B cell (primary cell): ENCODE measurements at regions of chr3 and their contacts with region 1.

Region 1: DNA sequence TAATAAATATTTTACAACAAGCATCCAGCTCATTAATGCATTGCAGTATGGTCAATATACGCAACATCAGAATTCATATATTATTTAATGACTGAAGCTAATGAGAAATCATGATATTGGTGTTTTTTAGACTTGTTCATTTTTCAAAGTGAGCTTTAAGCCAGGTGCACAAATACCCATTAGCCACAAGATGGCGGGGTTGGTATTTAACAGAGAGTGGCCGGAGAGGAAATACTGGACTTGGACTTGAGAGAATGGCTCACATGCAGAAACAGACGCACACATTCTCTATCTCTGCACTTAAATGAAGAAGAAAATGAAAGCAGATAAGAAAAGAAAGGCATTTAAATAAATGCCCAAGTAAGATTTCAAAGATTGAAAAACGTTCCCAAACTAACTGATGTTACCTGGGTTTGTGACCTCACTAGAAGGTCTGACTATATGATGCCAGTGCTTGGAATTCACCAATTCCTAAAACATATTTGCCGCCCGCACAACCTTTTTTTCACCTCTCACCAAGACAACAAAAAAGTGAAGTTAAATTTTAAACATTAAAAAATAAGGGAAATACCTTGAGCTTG is 21.2 kb upstream of the CRBN start:
- DNase-seq: peak; percentile 70
- ATAC-seq: peak; percentile 57
- H3K4me3 ChIP-seq: no peak overlapping the region
- H3K4me3 Mint-ChIP-seq: no peak overlapping the region
- H3K27ac ChIP-seq: no peak overlapping the region
- H3K27ac Mint-ChIP-seq: no peak overlapping the region
- H3K4me1 ChIP-seq: peaks cover 0 to 3% of the 10 kb centered on the region in 2 donors
- H3K4me1 Mint-ChIP-seq: peaks cover 8% of the 10 kb centered on the region
- H3K27me3 ChIP-seq: no peaks in the 10 kb centered on the region
- H3K27me3 Mint-ChIP-seq: peaks cover 9% of the 10 kb centered on the region
- CTCF ChIP-seq: peak; percentile 95

Region 2: DNA sequence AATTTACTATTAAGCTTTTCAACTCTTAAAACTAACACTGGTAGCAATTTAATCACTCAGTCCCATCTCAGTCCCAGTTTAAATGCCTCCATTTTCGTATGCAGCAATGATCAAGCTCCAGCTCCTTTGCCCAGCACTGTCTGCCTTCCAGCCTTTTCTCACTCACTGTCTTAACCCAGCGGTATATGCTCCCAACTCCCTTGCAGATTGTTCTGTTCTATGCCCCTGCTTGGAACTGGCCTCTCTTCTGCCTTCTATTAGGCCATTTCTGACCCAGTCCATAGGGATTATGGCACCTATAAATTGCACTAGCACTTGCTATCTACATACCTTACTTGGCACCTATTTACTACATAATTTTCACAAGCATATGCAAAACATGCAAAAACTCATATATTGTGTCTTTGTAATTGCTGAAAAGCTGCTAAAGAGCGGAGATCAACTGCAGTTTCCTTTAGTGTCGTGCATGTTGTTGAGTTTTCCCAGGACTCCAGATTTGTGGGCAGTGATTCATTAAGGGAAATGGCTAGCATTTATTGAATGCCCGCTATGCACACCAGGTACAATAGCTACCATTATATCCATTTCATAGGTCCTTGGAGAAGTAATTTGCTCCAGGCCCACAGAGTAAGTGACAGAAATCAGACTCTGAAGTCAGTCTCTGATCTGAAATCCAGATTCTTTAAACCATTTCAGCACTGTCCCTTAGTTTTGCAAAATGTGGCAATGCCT is 45.7 kb before region 1 on chr3:
- CTCF ChIA-PET with region 1: no interaction called
- POLR2A ChIA-PET with region 1: no interaction called
- intact Hi-C with region 1: no loop called
- DNase-seq: no peak
- ATAC-seq: no peak
- H3K4me3 ChIP-seq: no peak overlapping the region
- H3K4me3 Mint-ChIP-seq: no peak overlapping the region
- H3K27ac ChIP-seq: no peak overlapping the region
- H3K27ac Mint-ChIP-seq: no peak overlapping the region
- H3K4me1 ChIP-seq: no peaks in the 10 kb centered on the region
- H3K4me1 Mint-ChIP-seq: no peaks in the 10 kb centered on the region
- H3K27me3 ChIP-seq: no peaks in the 10 kb centered on the region
- H3K27me3 Mint-ChIP-seq: no peaks in the 10 kb centered on the region
- CTCF ChIP-seq: no peak

Region 3: GRCh38 chr3:3189102-3189727 is 11.5 kb before region 1 on chr3:
- CTCF ChIA-PET with region 1: interaction called, 23 read pairs
- POLR2A ChIA-PET with region 1: no interaction called
- intact Hi-C with region 1: no loop called
- DNase-seq: no peak
- ATAC-seq: no peak
- H3K4me3 ChIP-seq: no peak overlapping the region
- H3K4me3 Mint-ChIP-seq: no peak overlapping the region
- H3K27ac ChIP-seq: no peak overlapping the region
- H3K27ac Mint-ChIP-seq: no peak overlapping the region
- H3K4me1 ChIP-seq: no peaks in the 10 kb centered on the region
- H3K4me1 Mint-ChIP-seq: peaks cover 1% of the 10 kb centered on the region
- H3K27me3 ChIP-seq: peaks cover 0 to 15% (median 4%) of the 10 kb centered on the region in 4 experiments
- H3K27me3 Mint-ChIP-seq: peaks cover 59% of the 10 kb centered on the region
- CTCF ChIP-seq: no peak

Region 4: DNA sequence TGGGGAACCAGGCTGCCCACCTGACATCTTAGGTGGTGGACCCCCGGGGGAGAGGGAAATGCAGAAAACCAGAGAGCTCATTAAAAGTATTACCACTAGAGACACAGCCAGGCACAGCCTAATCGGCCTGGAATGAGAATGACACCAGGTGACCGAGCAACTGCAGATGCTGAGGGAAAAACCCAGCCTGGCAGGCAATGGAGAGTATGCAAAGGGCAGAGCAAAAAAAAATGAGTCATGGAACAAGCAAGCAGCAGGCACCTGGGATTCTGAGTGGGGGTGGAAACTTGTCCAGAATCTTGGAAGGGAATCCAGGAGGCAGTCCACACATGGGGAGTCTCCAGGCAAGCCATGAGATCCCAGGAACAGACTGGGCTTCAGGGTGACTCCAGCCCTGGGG is 414.8 kb after region 1 on chr3:
- CTCF ChIA-PET with region 1: no interaction called
- POLR2A ChIA-PET with region 1: no interaction called
- intact Hi-C with region 1: no loop called
- DNase-seq: no peak
- ATAC-seq: no peak
- H3K4me3 ChIP-seq: no peak overlapping the region
- H3K4me3 Mint-ChIP-seq: no peak overlapping the region
- H3K27ac ChIP-seq: no peak overlapping the region
- H3K27ac Mint-ChIP-seq: no peak overlapping the region
- H3K4me1 ChIP-seq: no peaks in the 10 kb centered on the region
- H3K4me1 Mint-ChIP-seq: no peaks in the 10 kb centered on the region
- H3K27me3 ChIP-seq: no peaks in the 10 kb centered on the region
- H3K27me3 Mint-ChIP-seq: no peaks in the 10 kb centered on the region
- CTCF ChIP-seq: no peak

Region 5: DNA sequence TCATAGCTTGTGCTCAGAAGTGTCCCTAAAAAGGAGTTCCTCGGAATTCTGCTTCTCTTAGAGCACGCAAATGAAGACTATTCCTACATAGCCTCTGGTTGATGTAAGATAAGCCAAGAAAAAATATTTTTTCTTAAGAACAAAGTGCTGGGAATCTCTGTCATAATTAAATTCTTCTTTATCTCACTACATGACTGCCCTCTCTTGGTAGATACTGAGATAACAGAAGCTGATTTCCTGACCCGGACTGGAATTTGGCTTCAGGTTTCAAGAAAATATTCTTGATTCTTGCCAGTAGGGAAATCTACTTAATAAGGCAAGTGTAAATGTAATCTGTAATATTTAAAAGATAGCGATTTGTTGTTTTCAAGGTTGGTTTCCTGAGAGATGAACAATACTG is 1071.1 kb after region 1 on chr3:
- CTCF ChIA-PET with region 1: interaction called, 116 read pairs
- POLR2A ChIA-PET with region 1: no interaction called
- intact Hi-C with region 1: loop called (anchors 1 kb)
- DNase-seq: peak; percentile 58
- ATAC-seq: no peak
- H3K4me3 ChIP-seq: no peak overlapping the region
- H3K4me3 Mint-ChIP-seq: peak overlapping the region; percentile 21
- H3K27ac ChIP-seq: no peak overlapping the region
- H3K27ac Mint-ChIP-seq: no peak overlapping the region
- H3K4me1 ChIP-seq: peaks cover 14 to 20% of the 10 kb centered on the region in 2 donors
- H3K4me1 Mint-ChIP-seq: peaks cover 25% of the 10 kb centered on the region
- H3K27me3 ChIP-seq: no peaks in the 10 kb centered on the region
- H3K27me3 Mint-ChIP-seq: no peaks in the 10 kb centered on the region
- CTCF ChIP-seq: peak; percentile 83

Region 6: GRCh38 chr3:4290272-4290893 is 1089.7 kb after region 1 on chr3:
- CTCF ChIA-PET with region 1: interaction called, 348 read pairs
- POLR2A ChIA-PET with region 1: no interaction called
- intact Hi-C with region 1: loop called (anchors 1 kb)
- DNase-seq: peak; percentile 67
- ATAC-seq: peak; percentile 62
- H3K4me3 ChIP-seq: no peak overlapping the region
- H3K4me3 Mint-ChIP-seq: no peak overlapping the region
- H3K27ac ChIP-seq: no peak overlapping the region
- H3K27ac Mint-ChIP-seq: no peak overlapping the region
- H3K4me1 ChIP-seq: no peaks in the 10 kb centered on the region
- H3K4me1 Mint-ChIP-seq: no peaks in the 10 kb centered on the region
- H3K27me3 ChIP-seq: no peaks in the 10 kb centered on the region
- H3K27me3 Mint-ChIP-seq: peaks cover 3% of the 10 kb centered on the region
- CTCF ChIP-seq: peak; percentile 99